ENCODE measurements at regions of chr1 and their contacts with region 1.

Region 1: GRCh38 chr1:187817782-187818181 is 989.0 kb downstream of the PLA2G4A start:
- DNase-seq: no peak
- H3K4me3 ChIP-seq: no peak overlapping the region
- H3K27ac ChIP-seq: no peak overlapping the region
- H3K4me1 ChIP-seq: no peaks in the 10 kb centered on the region
- H3K27me3 ChIP-seq: no peaks in the 10 kb centered on the region
- CTCF ChIP-seq: peak in 1 of 2 donors; percentile 1
- POLR2A ChIP-seq: no peak

Region 2: GRCh38 chr1:186535388-186536133 is 1282.2 kb before region 1 on chr1:
- CTCF ChIA-PET with region 1: no interaction called
- POLR2A ChIA-PET with region 1: interaction called, 10 read pairs
- dilution Hi-C with region 1: no loop called
- intact Hi-C with region 1: no loop called
- DNase-seq: peak; percentile 96
- H3K4me3 ChIP-seq: no peak overlapping the region
- H3K27ac ChIP-seq: peak overlapping the region; percentile 77
- H3K4me1 ChIP-seq: peaks cover 27% of the 10 kb centered on the region
- H3K27me3 ChIP-seq: no peaks in the 10 kb centered on the region
- CTCF ChIP-seq: no peak
- POLR2A ChIP-seq: no peak

Region 3: GRCh38 chr1:188027613-188028012 is 209.8 kb after region 1 on chr1:
- CTCF ChIA-PET with region 1: no interaction called
- POLR2A ChIA-PET with region 1: no interaction called
- dilution Hi-C with region 1: no loop called
- intact Hi-C with region 1: no loop called
- DNase-seq: peak; percentile 94
- H3K4me3 ChIP-seq: no peak overlapping the region
- H3K27ac ChIP-seq: peak overlapping the region; percentile 94
- H3K4me1 ChIP-seq: peaks cover 25% of the 10 kb centered on the region
- H3K27me3 ChIP-seq: no peaks in the 10 kb centered on the region
- CTCF ChIP-seq: no peak
- POLR2A ChIP-seq: peak; percentile 28